ENCODE measurements at regions of chr13 and their contacts with region 1.

Region 1: DNA sequence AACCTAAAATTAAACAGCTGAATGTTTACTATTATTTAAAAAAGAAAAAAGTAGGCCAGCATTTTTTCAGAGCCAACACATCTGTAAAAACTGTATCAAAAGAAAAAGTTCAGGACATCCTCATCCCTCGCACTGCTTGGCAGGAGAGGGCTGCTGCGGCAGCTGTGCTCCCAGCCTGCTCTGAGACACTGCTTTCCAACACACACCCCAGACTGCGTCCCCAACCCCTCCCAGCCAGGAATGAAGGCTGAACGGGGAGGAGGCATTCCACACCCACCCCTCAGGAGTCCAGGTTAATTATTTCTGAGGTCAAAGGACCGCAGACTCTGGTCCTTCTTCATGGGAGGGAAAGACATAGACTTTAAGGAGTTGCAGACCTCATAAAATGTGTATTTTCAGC is 43.1 kb downstream of the COL4A1 start:
- DNase-seq: no peak
- H3K4me3 ChIP-seq: no peak overlapping the region
- H3K27ac ChIP-seq: peak overlapping the region; percentile 25
- H3K4me1 ChIP-seq: peaks cover 85% of the 10 kb centered on the region
- H3K27me3 ChIP-seq: no peaks in the 10 kb centered on the region
- CTCF ChIP-seq: no peak
- POLR2A ChIP-seq: no peak

Region 2: DNA sequence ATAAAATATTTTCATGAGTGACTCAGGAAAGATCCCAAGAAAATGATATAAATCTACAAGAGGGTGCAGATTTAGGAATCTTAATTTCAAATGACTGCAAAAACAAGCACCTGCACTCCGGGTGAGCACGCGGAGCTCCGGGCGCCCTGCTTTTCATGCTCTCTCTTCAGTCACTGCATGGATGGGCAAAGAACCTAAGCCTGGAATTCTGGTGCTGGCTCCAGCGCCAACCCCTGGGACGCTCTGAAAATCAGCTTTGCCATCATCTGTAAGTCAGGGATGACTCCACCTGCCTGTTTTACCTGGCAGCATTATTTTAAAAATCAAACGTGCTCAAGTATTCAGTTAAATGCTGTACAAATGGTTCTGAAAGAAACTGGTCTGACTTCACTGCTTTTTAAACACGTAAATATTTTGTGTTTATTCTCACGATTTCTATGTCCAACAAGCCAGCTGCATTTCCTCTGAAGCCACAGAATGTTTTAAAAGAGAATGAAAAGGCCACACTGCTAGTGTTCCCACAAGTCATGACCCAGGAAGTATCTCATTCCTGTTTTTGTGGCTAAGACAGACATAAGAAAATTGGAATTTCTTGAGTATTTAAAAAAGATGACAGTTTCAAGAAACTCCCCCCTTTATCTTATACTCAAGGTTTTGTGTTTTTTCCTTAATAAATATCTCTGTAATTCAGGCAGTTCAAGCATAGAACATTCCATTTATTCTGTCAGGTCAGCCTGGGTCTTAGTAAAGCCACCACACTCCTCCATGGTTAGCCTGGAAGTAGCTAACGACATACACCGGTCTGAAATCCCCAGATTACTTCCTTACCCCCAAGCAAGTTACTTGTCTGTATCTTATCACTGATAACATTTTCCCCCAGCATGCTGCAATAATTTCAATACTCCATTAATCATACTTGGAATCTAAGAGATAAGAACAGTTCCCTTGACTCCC is 38.0 kb before region 1 on chr13:
- CTCF ChIA-PET with region 1: interaction called, 8 read pairs
- POLR2A ChIA-PET with region 1: no interaction called
- dilution Hi-C with region 1: no loop called
- intact Hi-C with region 1: loop called (anchors 1 kb)
- DNase-seq: peak; percentile 65
- H3K4me3 ChIP-seq: no peak overlapping the region
- H3K27ac ChIP-seq: peak overlapping the region; percentile 56
- H3K4me1 ChIP-seq: peaks cover 21% of the 10 kb centered on the region
- H3K27me3 ChIP-seq: no peaks in the 10 kb centered on the region
- CTCF ChIP-seq: no peak
- POLR2A ChIP-seq: no peak

Region 3: GRCh38 chr13:110233181-110233950 is 30.5 kb before region 1 on chr13:
- CTCF ChIA-PET with region 1: interaction called, 9 read pairs
- POLR2A ChIA-PET with region 1: no interaction called
- dilution Hi-C with region 1: no loop called
- intact Hi-C with region 1: loop called (anchors 1 kb)
- DNase-seq: peak; percentile 93
- H3K4me3 ChIP-seq: peak overlapping the region in 1 of 3 experiments; percentile 31
- H3K27ac ChIP-seq: peak overlapping the region; percentile 90
- H3K4me1 ChIP-seq: peaks cover 29% of the 10 kb centered on the region
- H3K27me3 ChIP-seq: no peaks in the 10 kb centered on the region
- CTCF ChIP-seq: no peak
- POLR2A ChIP-seq: peak; percentile 57

Region 4: DNA sequence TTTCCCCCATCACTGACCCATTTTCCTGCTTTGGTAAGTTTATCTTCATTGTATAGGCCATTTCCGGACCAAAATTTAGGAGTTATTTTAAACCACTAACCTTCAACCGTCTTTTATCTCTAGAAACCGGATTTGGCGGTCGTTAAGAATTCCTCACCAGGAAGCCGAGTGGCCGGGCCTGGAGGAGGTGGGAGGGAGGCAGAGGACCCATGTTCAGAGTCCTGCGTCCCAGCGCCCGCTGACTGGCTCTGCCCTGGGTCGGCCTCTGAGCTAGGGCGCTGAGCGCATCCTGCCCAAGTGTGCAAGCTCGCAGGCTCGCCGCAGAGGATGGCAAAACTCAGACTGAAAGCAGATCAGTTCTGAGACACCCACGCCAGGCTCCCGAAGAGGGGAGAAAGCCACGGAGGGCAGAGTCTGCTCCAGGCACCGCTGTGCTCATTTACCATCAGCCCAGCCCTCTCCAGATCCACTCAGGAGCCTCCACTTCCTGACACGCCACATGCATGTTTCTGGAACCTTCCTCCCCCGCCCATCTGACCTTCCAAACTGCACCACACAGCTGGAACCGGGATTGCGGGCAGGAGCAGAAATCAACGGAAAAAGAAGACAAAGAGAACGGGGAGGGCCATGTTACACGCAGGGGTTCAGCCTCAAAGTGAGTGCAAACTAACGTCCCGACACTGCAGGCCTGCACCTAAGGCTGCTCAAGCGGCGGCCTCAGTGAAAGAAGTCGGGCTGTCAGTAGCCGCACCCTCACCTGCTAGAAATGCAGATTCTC is 34.8 kb after region 1 on chr13:
- CTCF ChIA-PET with region 1: interaction called, 7 read pairs
- POLR2A ChIA-PET with region 1: interaction called, 3 read pairs
- dilution Hi-C with region 1: no loop called
- intact Hi-C with region 1: loop called (anchors 1 kb)
- DNase-seq: peak; percentile 54
- H3K4me3 ChIP-seq: peak overlapping the region in 1 of 3 experiments; percentile 20
- H3K27ac ChIP-seq: peak overlapping the region; percentile 23
- H3K4me1 ChIP-seq: peaks cover 61% of the 10 kb centered on the region
- H3K27me3 ChIP-seq: no peaks in the 10 kb centered on the region
- CTCF ChIP-seq: no peak
- POLR2A ChIP-seq: peak; percentile 4

Region 5: DNA sequence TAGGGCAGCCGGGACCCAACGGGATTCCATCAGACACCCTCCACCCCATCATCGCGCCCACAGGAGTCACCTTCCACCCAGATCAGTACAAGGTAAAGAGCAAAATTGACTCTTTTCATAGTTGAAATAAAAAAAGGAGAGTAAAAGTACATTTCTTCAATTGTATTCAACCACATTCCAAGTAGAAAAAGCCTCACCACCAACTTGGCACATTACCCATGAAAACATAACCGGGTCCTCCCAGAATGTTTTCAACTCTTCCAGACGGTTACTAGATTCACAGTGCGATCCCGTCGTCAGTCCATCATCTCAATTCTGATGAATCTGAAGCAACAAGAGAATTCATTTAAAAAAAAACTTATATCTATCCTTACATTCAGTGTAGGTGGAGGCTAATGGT is 172.4 kb after region 1 on chr13:
- CTCF ChIA-PET with region 1: no interaction called
- POLR2A ChIA-PET with region 1: no interaction called
- dilution Hi-C with region 1: no loop called
- intact Hi-C with region 1: no loop called
- DNase-seq: no peak
- H3K4me3 ChIP-seq: no peak overlapping the region
- H3K27ac ChIP-seq: no peak overlapping the region
- H3K4me1 ChIP-seq: peaks cover 22% of the 10 kb centered on the region
- H3K27me3 ChIP-seq: no peaks in the 10 kb centered on the region
- CTCF ChIP-seq: no peak
- POLR2A ChIP-seq: no peak

Region 6: GRCh38 chr13:110536006-110536693 is 272.3 kb after region 1 on chr13:
- CTCF ChIA-PET with region 1: no interaction called
- POLR2A ChIA-PET with region 1: no interaction called
- dilution Hi-C with region 1: no loop called
- intact Hi-C with region 1: no loop called
- DNase-seq: no peak
- H3K4me3 ChIP-seq: no peak overlapping the region
- H3K27ac ChIP-seq: no peak overlapping the region
- H3K4me1 ChIP-seq: no peaks in the 10 kb centered on the region
- H3K27me3 ChIP-seq: no peaks in the 10 kb centered on the region
- CTCF ChIP-seq: no peak
- POLR2A ChIP-seq: no peak

Region 7: DNA sequence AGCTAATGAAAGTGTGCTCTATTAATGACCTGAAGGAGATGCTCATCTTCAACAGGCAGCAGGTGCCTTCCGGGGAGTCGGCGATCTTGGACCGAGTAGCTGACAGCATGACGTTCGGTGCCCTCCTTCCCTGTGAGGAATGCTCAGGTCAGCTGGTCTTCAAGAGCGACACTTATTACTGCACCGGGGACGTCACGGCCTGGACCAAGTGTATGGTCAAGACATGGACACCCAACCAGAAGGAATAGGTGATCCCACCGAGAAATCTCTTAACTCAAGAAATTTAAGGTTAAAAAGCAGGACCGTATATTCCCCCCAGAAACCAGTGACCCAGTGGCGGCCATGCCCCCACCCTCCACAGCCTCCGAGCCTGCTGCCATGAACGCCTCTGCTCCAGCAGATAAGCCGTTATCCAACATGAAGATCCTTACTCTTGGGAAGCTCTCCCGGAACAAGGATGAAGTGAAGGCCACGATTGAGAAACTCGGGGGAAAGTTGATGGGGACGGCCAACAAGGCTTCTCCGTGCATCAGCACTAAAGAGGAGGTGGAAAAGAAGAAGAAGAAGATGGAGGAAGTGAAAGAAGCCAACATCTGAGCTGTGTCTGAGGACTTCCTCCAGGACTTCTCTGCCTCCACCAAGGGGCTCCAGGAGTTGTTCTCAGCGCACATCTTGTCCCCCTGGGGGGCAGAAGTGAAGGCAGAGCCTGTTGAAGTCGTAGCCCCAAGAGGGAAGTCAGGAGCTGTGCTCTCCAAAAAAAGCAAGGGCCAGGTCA is 673.8 kb after region 1 on chr13:
- CTCF ChIA-PET with region 1: no interaction called
- POLR2A ChIA-PET with region 1: no interaction called
- dilution Hi-C with region 1: no loop called
- intact Hi-C with region 1: no loop called
- DNase-seq: no peak
- H3K4me3 ChIP-seq: no peak overlapping the region
- H3K27ac ChIP-seq: no peak overlapping the region
- H3K4me1 ChIP-seq: no peaks in the 10 kb centered on the region
- H3K27me3 ChIP-seq: no peaks in the 10 kb centered on the region
- CTCF ChIP-seq: no peak
- POLR2A ChIP-seq: no peak

Measured in endothelial cell of umbilical vein (primary cell).